ENCODE measurements at regions of chr19 and their contacts with region 1.

Region 1: GRCh38 chr19:49712397-49712859 is 21.5 kb downstream of the CPT1C start:
- DNase-seq: peak; percentile 49 to 78
- H3K4me3 ChIP-seq: no peak overlapping the region
- H3K4me3 Mint-ChIP-seq: no peak overlapping the region
- H3K27ac Mint-ChIP-seq: peak overlapping the region; percentile 54
- H3K4me1 ChIP-seq: peaks cover 8% of the 10 kb centered on the region; the same call in 1 of the 2 replicates
- H3K4me1 Mint-ChIP-seq: peaks cover 24% of the 10 kb centered on the region
- H3K27me3 ChIP-seq: no peaks in the 10 kb centered on the region
- H3K27me3 Mint-ChIP-seq: no peaks in the 10 kb centered on the region
- CTCF ChIP-seq: no peak

Region 2: DNA sequence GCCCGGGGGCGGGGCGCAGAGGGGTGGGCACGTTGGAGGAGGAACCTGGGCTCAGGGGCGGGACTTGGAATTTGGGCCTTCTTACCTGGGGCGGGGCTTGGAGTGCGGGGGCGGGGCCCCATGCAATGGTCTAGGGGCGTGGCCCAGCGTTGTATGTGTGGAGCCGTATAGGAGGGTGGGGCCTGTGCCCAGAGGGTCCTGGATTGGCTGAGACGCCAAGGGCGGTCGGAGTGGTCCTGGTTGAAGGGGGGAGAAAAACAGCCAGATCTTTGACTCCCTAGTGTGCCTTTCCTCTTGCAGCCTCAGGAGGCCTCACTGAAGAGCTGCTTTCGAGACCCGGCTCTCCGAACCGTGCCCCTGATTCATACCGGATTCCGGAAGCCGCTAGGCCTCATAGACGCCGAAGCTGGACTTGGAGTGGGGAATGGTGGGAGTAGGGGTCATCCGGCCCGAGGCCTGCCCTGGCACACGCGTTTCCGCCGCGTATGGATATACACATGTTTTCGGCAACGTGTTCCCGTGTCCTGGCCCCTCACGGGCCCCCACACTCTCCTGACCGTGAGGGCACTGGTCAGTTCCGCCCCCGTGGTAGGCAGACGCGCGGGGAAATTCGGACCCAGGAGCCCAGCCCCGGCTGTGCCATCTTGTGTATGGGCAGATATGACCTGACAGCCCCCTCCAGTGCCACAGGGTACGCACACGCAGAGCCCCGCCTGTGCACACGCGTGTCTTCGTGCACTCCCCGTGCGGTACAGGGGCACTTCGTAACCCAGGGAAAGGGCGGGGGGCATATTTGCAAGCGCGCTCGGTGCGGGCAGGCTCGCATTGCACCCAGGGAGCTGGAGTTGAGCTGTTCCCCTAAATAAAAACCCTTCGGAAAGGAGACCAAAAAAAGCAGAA is 122.1 kb before region 1 on chr19:
- CTCF ChIA-PET with region 1: no interaction called
- POLR2A ChIA-PET with region 1: interaction called, 13 read pairs
- intact Hi-C with region 1: no loop called
- DNase-seq: peak; percentile 99
- H3K4me3 ChIP-seq: peak overlapping the region; percentile 99
- H3K4me3 Mint-ChIP-seq: peak overlapping the region; percentile 74
- H3K27ac Mint-ChIP-seq: peak overlapping the region; percentile 82
- H3K4me1 ChIP-seq: peaks cover 10% of the 10 kb centered on the region
- H3K4me1 Mint-ChIP-seq: peaks cover 29% of the 10 kb centered on the region
- H3K27me3 ChIP-seq: no peaks in the 10 kb centered on the region
- H3K27me3 Mint-ChIP-seq: no peaks in the 10 kb centered on the region
- CTCF ChIP-seq: no peak

Region 3: GRCh38 chr19:49775742-49776370 is 63.4 kb after region 1 on chr19:
- CTCF ChIA-PET with region 1: no interaction called
- POLR2A ChIA-PET with region 1: no interaction called
- intact Hi-C with region 1: no loop called
- DNase-seq: no peak
- H3K4me3 ChIP-seq: no peak overlapping the region
- H3K4me3 Mint-ChIP-seq: no peak overlapping the region
- H3K27ac Mint-ChIP-seq: peak overlapping the region; percentile 53
- H3K4me1 ChIP-seq: peaks cover 16% of the 10 kb centered on the region
- H3K4me1 Mint-ChIP-seq: peaks cover 18% of the 10 kb centered on the region
- H3K27me3 ChIP-seq: no peaks in the 10 kb centered on the region
- H3K27me3 Mint-ChIP-seq: no peaks in the 10 kb centered on the region
- CTCF ChIP-seq: no peak